ENCODE measurements at regions of chr10 and their contacts with region 1.

Region 1: GRCh38 chr10:69684020-69684980 is 54.3 kb downstream of the FAM241B start:
- DNase-seq: no peak
- ATAC-seq: peak; percentile 62
- H3K4me3 Mint-ChIP-seq: no peak overlapping the region
- H3K27ac Mint-ChIP-seq: no peak overlapping the region
- H3K4me1 Mint-ChIP-seq: peaks cover 21% of the 10 kb centered on the region
- H3K27me3 Mint-ChIP-seq: peaks cover 6% of the 10 kb centered on the region
- CTCF ChIP-seq: no peak

Region 2: DNA sequence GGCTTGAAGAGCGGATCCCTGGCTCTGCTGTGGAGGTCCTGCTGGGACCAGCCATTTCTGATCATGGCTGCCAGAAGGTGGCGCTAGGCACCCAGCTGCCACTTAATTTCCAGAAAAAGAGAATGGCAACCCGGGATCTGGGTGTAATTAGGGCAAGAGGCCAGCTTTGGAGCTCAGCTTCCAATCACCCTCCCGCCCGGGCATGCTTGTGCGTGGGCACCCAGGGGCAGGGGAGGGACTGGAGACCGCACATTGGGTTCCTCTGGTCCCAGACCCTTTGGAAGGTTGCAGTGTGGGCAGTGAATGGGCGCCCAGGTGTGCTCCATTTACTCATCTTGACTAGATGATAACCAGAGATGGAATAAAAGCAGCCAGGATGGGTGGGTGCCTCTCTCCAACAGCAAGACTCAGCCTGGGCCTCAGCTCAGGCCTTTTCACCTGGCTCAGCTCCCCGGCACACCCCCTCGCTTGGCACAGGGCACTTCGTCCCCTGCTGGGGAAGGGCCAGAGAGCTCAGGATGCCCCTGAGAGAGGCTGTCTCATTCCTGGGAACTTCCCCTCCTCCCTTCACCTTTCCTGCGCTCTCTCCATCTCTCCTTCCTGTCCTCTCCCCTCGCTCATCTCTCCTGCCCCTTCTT is 39.5 kb before region 1 on chr10:
- CTCF ChIA-PET with region 1: interaction called, 10 read pairs
- POLR2A ChIA-PET with region 1: no interaction called
- DNase-seq: peak; percentile 77
- ATAC-seq: peak; percentile 75
- H3K4me3 Mint-ChIP-seq: no peak overlapping the region
- H3K27ac Mint-ChIP-seq: no peak overlapping the region
- H3K4me1 Mint-ChIP-seq: peaks cover 30% of the 10 kb centered on the region
- H3K27me3 Mint-ChIP-seq: no peaks in the 10 kb centered on the region; the same call in 1 of the 2 replicates
- CTCF ChIP-seq: peak; percentile 72

Region 3: GRCh38 chr10:69673521-69673920 is 10.8 kb before region 1 on chr10:
- CTCF ChIA-PET with region 1: no interaction called
- POLR2A ChIA-PET with region 1: no interaction called
- DNase-seq: no peak
- ATAC-seq: no peak
- H3K4me3 Mint-ChIP-seq: no peak overlapping the region
- H3K27ac Mint-ChIP-seq: no peak overlapping the region
- H3K4me1 Mint-ChIP-seq: no peaks in the 10 kb centered on the region
- H3K27me3 Mint-ChIP-seq: peaks cover 9% of the 10 kb centered on the region; the same call in 1 of the 2 replicates
- CTCF ChIP-seq: no peak

Region 4: DNA sequence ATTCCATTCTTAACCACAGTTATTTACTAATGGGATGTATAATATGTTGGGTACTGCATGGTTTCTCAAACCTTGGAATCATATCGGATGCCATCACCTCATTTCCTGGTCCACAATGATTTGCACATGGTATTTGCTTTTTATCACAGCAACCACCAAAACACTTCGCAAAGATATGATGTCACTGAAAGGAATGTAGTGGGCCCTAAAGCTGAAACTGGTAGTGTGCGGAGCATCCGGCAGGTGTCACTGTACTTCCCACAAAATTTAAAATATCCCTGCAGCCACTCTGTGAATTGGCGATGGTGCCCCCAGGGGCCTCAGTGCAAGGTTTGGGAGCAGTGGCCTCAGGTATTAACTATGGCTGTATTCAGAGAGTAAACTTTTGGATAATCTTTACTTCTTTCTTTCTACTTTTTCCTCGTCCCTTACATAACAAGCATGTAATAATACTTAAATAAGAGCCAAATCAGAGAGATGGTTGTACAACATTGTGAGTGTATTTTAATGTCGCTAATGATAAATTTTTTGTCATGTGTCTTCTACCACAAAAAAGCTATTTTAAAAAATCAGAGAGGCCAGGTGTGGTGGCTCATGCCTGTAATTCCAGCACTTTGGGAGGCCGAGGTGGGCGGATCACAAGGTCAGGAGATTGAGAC is 11.9 kb after region 1 on chr10:
- CTCF ChIA-PET with region 1: interaction called, 11 read pairs
- POLR2A ChIA-PET with region 1: no interaction called
- DNase-seq: peak; percentile 58
- ATAC-seq: peak; percentile 91
- H3K4me3 Mint-ChIP-seq: no peak overlapping the region
- H3K27ac Mint-ChIP-seq: no peak overlapping the region
- H3K4me1 Mint-ChIP-seq: no peaks in the 10 kb centered on the region
- H3K27me3 Mint-ChIP-seq: peaks cover 10% of the 10 kb centered on the region
- CTCF ChIP-seq: peak; percentile 33; the same call in 1 of the 2 replicates

Region 5: GRCh38 chr10:69968830-69969229 is 284.5 kb after region 1 on chr10:
- CTCF ChIA-PET with region 1: no interaction called
- POLR2A ChIA-PET with region 1: no interaction called
- DNase-seq: peak; percentile 51
- ATAC-seq: peak; percentile 91
- H3K4me3 Mint-ChIP-seq: no peak overlapping the region
- H3K27ac Mint-ChIP-seq: no peak overlapping the region
- H3K4me1 Mint-ChIP-seq: peaks cover 6% of the 10 kb centered on the region
- H3K27me3 Mint-ChIP-seq: peaks cover 34% of the 10 kb centered on the region
- CTCF ChIP-seq: no peak